ENCODE measurements at regions of chr10 and their contacts with region 1.

Region 1: DNA sequence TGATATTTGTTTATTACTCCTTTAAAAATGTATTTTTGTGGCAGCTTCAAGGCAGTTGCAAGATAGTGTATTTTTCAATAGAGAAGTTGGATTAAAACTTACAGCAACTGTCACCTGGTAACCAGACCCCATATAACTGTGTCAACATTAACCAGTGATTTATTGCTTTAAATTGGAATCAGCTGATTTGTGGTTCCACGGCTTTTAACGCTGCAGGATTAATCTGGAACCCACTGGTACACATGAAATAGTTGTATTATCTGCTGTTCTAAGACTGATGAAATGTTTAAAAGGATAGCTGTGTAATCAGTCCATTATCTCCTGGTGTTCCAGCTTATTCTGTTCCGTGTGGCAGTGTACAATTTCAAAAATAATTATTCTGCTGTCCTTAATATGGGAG is 180.2 kb downstream of the CELF2 start:
- DNase-seq: no peak
- ATAC-seq: no peak
- H3K4me3 Mint-ChIP-seq: peak overlapping the region in 7 of 10 donors; percentile 31 to 67 (median 55)
- H3K27ac Mint-ChIP-seq: peak overlapping the region in 9 of 10 donors; percentile 47 to 90 (median 72)
- H3K4me1 Mint-ChIP-seq: peaks cover 63 to 99% (median 96%) of the 10 kb centered on the region in 4 donors
- H3K27me3 Mint-ChIP-seq: no peaks in the 10 kb centered on the region

Region 2: DNA sequence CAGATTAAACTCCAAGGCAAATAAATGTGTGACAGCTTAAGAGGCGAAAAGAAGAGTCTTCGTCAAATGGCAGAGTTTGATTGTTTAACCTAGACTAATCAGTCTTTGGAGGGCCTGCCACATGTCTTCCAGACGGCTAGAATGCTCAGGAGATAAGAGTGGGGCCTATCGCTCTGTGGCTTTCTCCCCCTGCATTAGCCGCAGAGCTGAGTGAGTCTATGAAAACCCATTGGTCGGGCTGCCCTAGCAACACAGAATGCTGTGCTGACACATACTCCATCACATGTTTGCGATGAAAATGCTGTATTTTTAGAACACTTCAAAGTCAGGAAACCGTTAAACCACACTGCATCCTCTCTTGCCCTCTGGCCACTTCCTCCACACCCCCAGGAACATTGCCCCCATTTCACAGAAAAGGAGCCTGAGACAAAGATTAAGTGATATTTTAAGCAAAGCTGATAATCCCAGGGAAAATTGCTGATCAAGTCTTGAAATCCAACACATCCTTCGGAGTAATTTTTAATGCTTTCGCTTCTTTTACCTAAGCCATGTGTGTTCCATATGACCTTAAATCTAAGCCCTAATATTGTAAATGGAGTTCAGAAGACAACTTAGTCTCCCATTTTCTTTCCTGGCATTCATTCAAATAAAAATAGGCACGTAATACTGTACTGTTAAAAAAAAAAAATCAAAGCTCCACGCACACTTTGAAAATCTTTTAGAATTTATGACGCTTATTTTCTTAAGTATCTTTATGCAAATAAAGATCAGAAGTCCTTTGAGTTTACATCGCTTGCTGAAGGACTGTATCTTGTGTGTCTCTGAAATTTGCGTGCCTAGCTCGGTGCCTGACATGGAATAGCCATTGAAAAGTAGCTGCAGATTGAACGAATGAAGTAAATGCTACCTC is 19.0 kb before region 1 on chr10:
- POLR2A ChIA-PET with region 1: interaction called, 11 read pairs
- DNase-seq: peak; percentile 58 to 92 (median 86)
- ATAC-seq: peak; percentile 82 to 89
- H3K4me3 Mint-ChIP-seq: peak overlapping the region in 8 of 10 donors; percentile 74 to 89 (median 87)
- H3K27ac Mint-ChIP-seq: peak overlapping the region in 6 of 10 donors; percentile 94 to 99 (median 98)
- H3K4me1 Mint-ChIP-seq: peaks cover 31 to 97% (median 46%) of the 10 kb centered on the region in 4 donors
- H3K27me3 Mint-ChIP-seq: no peaks in the 10 kb centered on the region

Region 3: GRCh38 chr10:11367505-11367904 is 169.6 kb after region 1 on chr10:
- POLR2A ChIA-PET with region 1: no interaction called
- DNase-seq: no peak
- ATAC-seq: no peak
- H3K4me3 Mint-ChIP-seq: peak overlapping the region in 2 of 10 donors; percentile 10 to 68
- H3K27ac Mint-ChIP-seq: peak overlapping the region in 5 of 10 donors; percentile 56 to 88 (median 72)
- H3K4me1 Mint-ChIP-seq: peaks cover 4 to 23% (median 14%) of the 10 kb centered on the region in 4 donors
- H3K27me3 Mint-ChIP-seq: no peaks in the 10 kb centered on the region